BJ (cell line): ENCODE measurements at regions of chr9 and their contacts with region 1.

Region 1: GRCh38 chr9:127734747-127735529 is at the start of gene TOR2A:
- DNase-seq: peak; percentile 75
- H3K4me3 ChIP-seq: peak within 1 kb of the TSS; percentile 55
- H3K27me3 ChIP-seq: peaks cover 6% of the 10 kb centered on the region
- CTCF ChIP-seq: peak; percentile 96
- polyA plus RNA-seq, gene TOR2A: 4.8 and 8.0 TPM in 2 replicates

Region 2: DNA sequence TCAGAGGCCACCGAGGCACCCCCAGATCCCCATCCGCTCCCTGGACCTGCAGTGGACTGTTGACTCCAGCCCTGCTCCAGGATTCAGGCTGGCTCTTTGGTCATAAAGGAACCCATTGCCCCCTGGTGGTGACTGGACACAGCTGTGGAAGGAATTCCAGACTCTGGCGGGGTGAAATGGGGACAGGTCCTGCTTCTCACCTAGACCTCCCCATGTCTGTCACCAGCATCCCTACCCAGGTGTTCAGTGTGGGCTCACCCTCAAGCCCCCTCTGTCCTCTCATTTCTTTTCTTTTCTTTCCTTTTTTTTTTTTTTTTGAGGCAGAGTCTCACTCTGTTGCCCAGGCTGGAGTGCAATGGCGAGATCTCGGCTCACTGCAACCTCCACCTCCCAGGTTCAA is 148.4 kb before region 1 on chr9:
- CTCF ChIA-PET with region 1: interaction called, 58 read pairs
- POLR2A ChIA-PET with region 1: interaction called, 11 read pairs
- DNase-seq: no peak
- H3K4me3 ChIP-seq: no peak overlapping the region
- H3K27me3 ChIP-seq: no peaks in the 10 kb centered on the region
- CTCF ChIP-seq: peak; percentile 91

Region 3: DNA sequence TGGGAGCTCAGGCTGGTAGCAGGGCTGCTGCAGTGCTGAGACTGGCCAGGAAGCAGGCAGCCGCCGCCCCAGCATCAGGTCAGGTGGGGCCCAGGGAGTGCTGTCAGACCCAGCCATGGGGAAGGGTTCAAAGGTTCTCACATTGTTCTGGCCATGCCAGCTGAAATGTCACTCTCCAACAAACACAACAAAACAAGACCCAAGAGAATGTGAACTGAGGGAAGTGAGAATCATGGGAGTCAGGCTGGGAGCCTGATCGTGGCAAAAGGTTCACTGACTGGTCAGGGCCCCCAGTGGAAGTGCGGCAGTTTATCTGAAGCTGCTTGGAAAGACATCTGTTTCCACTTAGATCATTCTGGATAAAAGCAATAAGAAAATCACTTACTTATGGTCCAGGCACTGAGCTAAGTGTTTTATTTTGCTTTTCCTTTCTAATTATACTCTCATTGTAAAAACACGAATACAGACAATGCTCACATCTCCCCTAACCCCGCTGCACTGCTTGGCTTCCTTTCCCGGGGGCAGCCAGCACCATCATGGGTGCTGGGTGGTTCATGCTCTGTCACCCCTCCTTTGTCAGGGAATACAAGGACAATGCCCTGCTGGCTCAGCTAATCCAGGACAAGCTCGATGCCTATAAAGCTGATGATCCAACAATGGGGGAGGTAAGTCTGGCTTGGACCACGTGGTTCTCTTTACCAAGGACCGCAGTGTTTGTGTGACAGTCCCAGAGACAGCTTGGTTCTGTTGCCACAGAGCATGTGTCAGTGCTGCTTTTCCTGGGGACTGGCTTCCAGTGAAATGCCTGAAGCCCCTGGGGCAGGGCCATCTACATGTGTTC is 70.1 kb before region 1 on chr9:
- CTCF ChIA-PET with region 1: interaction called, 11 read pairs
- POLR2A ChIA-PET with region 1: no interaction called
- DNase-seq: peak; percentile 39
- H3K4me3 ChIP-seq: no peak overlapping the region
- H3K27me3 ChIP-seq: no peaks in the 10 kb centered on the region
- CTCF ChIP-seq: no peak

Region 4: DNA sequence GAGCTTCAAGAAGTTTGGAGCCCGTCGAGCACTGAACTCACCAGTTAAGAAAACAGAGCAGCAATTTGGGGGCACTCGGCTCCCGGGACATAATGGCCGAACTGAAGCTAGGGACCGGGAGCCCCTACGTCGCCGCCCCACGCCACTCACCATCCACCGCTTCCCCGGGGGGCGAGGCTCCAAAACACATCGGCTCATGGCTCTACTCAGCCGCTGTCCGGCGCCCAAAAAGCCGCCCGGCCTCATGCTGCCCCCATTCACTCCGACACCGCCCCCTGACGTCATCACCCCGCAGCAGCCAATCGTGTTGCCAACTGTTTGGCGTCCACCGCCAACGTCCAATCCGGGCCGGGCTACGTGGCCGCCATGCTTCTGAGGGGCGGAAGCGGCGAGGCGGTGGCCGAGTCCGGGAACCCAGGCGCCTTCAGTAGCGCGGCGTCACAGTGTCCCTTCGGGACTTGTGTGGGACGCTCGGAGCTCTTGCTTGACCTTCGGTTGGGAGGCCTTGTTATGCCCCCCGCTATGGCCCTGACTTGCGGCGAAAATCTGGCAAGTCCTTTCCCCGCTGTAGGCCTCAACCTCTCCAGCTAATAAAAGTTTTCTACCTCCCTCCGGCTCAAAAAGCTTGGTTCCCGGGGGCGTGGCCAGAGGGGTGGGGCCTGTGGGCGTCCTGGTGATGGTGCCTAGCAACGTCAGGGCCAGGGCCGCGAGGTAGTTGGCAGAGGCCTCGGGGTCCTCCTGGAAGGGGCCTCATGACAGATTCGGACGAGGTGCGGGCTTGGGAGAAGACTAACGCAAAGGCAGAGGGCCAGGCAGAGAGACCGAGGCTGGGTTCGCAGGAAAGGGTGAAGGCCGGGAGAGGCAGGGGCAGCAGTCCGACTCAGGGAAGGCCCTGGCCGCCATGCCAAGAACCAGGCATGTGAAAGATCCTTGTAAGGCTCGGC is 19.3 kb before region 1 on chr9 and contains the starts of genes PTRH1 and TTC16:
- CTCF ChIA-PET with region 1: interaction called, 20 read pairs
- POLR2A ChIA-PET with region 1: no interaction called
- DNase-seq: peak; percentile 65
- H3K4me3 ChIP-seq: peak within 1 kb of the TSS; percentile 87
- H3K27me3 ChIP-seq: no peaks in the 10 kb centered on the region
- CTCF ChIP-seq: no peak
- polyA plus RNA-seq, gene PTRH1: 14.6 and 21.1 TPM in 2 replicates
- polyA plus RNA-seq, gene TTC16: 0.02 and 0.07 TPM in 2 replicates

Region 5: GRCh38 chr9:127785023-127785932 is 50.3 kb after region 1 on chr9:
- CTCF ChIA-PET with region 1: interaction called, 10 read pairs
- POLR2A ChIA-PET with region 1: no interaction called
- DNase-seq: no peak
- H3K4me3 ChIP-seq: peak overlapping the region; percentile 95
- H3K27me3 ChIP-seq: 0 out of 2 replicates have a peak, but pooled peaks cover under 1% of the 10 kb centered on the region
- CTCF ChIP-seq: peak; percentile 91

Region 6: DNA sequence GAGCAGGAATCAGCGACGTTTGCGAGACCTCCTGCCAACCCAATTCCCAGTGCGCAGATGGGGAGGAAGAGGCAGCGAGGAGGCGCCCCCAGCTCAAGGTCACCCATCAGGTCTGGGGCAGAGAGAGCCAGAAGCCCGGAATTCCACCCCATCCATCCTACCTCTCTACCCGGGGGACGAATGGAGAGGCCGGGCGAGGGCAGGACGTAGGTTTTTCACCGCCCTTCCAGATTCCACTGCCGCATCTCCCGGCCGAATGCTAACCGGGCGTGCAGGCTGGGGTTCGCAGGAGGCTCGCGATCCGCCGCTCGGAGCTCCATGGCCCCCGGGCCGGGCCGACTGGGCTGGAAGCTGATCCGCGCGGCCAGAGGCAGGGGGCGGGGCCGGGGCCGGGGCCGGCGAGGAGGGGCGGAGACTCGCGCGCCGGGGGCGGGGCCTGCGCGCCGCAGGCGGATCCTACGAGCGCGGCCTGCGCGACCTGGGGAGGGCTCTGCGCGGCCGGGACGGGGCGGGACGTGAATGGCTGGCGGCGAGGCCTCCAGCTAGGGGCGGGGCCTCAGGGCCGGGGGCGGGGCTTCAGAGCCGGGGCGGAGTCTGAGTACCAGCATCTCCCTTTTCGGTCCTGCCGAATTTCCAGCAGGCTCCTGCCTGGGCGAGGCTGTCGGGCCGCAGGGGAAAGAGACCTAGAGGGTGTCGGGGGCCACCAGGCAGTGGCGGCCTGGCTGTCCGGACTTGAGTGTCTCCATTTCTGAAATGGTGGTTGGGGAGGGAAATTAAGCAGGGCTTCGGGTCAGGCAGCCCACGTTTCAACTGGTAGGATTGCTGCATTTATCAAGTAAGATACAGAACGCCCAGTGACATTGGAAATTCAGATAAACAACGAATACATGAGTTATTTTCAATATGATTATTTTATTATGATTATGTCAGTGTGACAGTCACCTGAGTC is 182.0 kb after region 1 on chr9 and contains the start of gene ST6GALNAC4:
- CTCF ChIA-PET with region 1: interaction called, 70 read pairs
- POLR2A ChIA-PET with region 1: no interaction called
- DNase-seq: no peak
- H3K4me3 ChIP-seq: peak within 1 kb of the TSS; percentile 51
- H3K27me3 ChIP-seq: no peaks in the 10 kb centered on the region
- CTCF ChIP-seq: peak; percentile 5; the same call in 1 of the 2 replicates
- polyA plus RNA-seq, gene ST6GALNAC4: 21.4 and 35.5 TPM in 2 replicates